ENCODE measurements at regions of chr1 and their contacts with region 1.

Region 1: GRCh38 chr1:246471688-246472087 is 35.4 kb downstream of the SMYD3 start:
- DNase-seq: no peak
- ATAC-seq: peak; percentile 31; the same call in 1 of the 3 replicates
- H3K4me3 ChIP-seq: no peak overlapping the region
- H3K27ac ChIP-seq: no peak overlapping the region
- H3K4me1 ChIP-seq: peaks cover under 1% of the 10 kb centered on the region; the same call in 1 of the 2 replicates
- H3K27me3 ChIP-seq: no peaks in the 10 kb centered on the region
- CTCF ChIP-seq: no peak
- EP300 ChIP-seq: no peak
- POLR2A ChIP-seq: no peak
- RAD21 ChIP-seq: no peak

Region 2: GRCh38 chr1:246482805-246483568 is 11.3 kb after region 1 on chr1:
- CTCF ChIA-PET with region 1: interaction called, 4 read pairs
- POLR2A ChIA-PET with region 1: no interaction called
- RAD21 ChIA-PET with region 1: interaction called, 4 read pairs
- SMC1A ChIA-PET with region 1: interaction called, 10 read pairs
- in situ Hi-C with region 1: no loop called
- intact Hi-C with region 1: no loop called
- DNase-seq: no peak
- ATAC-seq: peak; percentile 82
- H3K4me3 ChIP-seq: peak overlapping the region; percentile 32; the same call in 1 of the 2 replicates
- H3K27ac ChIP-seq: peak overlapping the region; percentile 62
- H3K4me1 ChIP-seq: peaks cover 13% of the 10 kb centered on the region
- H3K27me3 ChIP-seq: no peaks in the 10 kb centered on the region
- CTCF ChIP-seq: no peak
- EP300 ChIP-seq: no peak
- POLR2A ChIP-seq: no peak
- RAD21 ChIP-seq: no peak

Region 3: DNA sequence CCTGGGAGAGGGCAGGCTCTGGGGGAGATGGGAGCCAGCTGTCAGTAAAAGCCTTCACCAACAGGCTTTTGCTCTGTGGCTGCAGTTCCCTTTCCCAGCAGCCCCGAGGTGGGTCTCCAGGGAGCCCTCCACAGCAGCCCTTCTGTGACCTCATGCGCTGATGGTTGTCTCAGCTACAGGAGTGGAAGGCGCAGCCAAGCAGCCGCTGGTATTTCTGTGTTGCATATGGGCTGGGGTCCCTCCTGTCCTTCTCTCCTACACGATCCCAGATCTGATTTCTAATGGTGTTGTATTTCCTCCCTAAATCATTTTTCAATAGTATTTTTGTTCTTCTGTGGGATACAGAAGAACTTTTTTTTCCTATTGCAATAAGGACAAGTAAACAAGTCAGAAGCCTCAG is 210.2 kb after region 1 on chr1:
- CTCF ChIA-PET with region 1: no interaction called
- POLR2A ChIA-PET with region 1: no interaction called
- RAD21 ChIA-PET with region 1: no interaction called
- SMC1A ChIA-PET with region 1: no interaction called
- in situ Hi-C with region 1: no loop called
- intact Hi-C with region 1: no loop called
- DNase-seq: no peak
- ATAC-seq: no peak; the same call in 2 of the 3 replicates
- H3K4me3 ChIP-seq: no peak overlapping the region
- H3K27ac ChIP-seq: no peak overlapping the region
- H3K4me1 ChIP-seq: no peaks in the 10 kb centered on the region
- H3K27me3 ChIP-seq: no peaks in the 10 kb centered on the region
- CTCF ChIP-seq: no peak
- EP300 ChIP-seq: no peak
- POLR2A ChIP-seq: no peak
- RAD21 ChIP-seq: no peak

Measured in GM12878 (cell line).